ENCODE measurements at regions of chr13 and their contacts with region 1.

Region 1: GRCh38 chr13:41075034-41075433 is 13.7 kb downstream of the WBP4 start:
- H3K4me3 Mint-ChIP-seq: no peak overlapping the region
- H3K27ac Mint-ChIP-seq: no peak overlapping the region
- H3K4me1 Mint-ChIP-seq: no peaks in the 10 kb centered on the region
- H3K27me3 Mint-ChIP-seq: no peaks in the 10 kb centered on the region

Region 2: GRCh38 chr13:40974460-40975407 is 100.3 kb before region 1 on chr13:
- intact Hi-C with region 1: no loop called
- H3K4me3 Mint-ChIP-seq: no peak overlapping the region
- H3K27ac Mint-ChIP-seq: no peak overlapping the region
- H3K4me1 Mint-ChIP-seq: peaks cover 70% of the 10 kb centered on the region
- H3K27me3 Mint-ChIP-seq: no peaks in the 10 kb centered on the region

Region 3: DNA sequence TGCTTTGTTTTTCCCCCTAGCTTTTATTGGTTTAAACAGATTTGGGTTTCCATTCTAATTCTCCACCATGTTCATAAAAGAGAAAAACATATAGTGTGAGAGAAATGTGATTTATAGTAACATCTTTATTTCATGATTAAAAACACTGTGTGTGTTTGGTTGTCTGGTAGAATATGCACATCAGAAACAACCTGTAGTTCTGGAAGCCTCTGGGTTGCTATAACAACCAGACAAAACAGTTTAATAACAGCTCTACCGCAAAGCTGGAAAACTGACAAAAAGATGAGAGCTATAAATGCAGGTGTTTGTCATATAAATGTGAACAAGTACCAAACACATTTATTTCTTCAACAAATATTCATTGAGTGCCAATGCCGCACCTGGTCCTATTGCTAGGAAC is 47.8 kb after region 1 on chr13:
- intact Hi-C with region 1: loop called (anchors 5 kb)
- H3K4me3 Mint-ChIP-seq: no peak overlapping the region
- H3K27ac Mint-ChIP-seq: no peak overlapping the region
- H3K4me1 Mint-ChIP-seq: peaks cover under 1% of the 10 kb centered on the region
- H3K27me3 Mint-ChIP-seq: no peaks in the 10 kb centered on the region

Region 4: GRCh38 chr13:41222259-41222852 is 147.3 kb after region 1 on chr13:
- intact Hi-C with region 1: loop called (anchors 1 kb)
- H3K4me3 Mint-ChIP-seq: no peak overlapping the region
- H3K27ac Mint-ChIP-seq: no peak overlapping the region
- H3K4me1 Mint-ChIP-seq: no peaks in the 10 kb centered on the region
- H3K27me3 Mint-ChIP-seq: no peaks in the 10 kb centered on the region

Region 5: DNA sequence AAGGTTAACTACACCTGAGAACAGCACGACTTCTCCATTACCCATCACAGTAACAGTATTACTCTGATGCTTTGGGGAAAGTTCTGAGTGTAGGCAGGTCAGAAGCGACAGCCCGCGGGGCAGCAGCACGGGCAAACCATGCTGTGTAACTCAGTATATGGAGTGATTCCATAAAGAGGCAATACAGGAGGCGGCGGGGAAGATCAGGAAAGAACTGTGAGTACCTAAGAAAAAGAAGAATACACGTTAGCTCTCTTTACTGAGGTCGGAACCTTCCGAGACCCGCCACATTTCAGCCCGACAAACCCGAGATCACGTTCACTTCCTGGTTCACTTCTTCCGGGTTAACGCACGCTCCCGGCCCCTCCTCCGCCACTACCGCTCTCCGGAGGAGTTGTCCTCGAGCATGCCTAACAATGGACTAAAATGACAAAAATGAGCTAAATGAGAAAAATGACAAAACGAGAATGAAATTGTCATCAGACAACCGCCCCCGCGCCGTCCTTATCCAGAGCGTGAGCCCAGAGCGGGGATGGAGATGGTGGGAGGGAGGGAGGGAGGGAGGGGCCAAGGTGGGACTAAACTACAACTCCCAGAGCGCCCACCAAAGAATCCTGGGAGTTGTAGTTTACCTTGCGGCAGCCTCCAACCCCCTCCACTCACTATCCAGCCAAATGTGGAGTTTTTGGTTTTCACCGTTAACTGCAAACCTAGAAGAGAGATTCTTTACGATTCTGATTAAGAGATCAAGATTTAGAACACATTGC is 188.4 kb after region 1 on chr13 and contains the start of gene MTRF1:
- intact Hi-C with region 1: no loop called
- H3K4me3 Mint-ChIP-seq: peak within 1 kb of the TSS; percentile 99
- H3K27ac Mint-ChIP-seq: peak within 1 kb of the TSS; percentile 93
- H3K4me1 Mint-ChIP-seq: peaks cover 6% of the 10 kb centered on the region
- H3K27me3 Mint-ChIP-seq: no peaks in the 10 kb centered on the region

Region 6: DNA sequence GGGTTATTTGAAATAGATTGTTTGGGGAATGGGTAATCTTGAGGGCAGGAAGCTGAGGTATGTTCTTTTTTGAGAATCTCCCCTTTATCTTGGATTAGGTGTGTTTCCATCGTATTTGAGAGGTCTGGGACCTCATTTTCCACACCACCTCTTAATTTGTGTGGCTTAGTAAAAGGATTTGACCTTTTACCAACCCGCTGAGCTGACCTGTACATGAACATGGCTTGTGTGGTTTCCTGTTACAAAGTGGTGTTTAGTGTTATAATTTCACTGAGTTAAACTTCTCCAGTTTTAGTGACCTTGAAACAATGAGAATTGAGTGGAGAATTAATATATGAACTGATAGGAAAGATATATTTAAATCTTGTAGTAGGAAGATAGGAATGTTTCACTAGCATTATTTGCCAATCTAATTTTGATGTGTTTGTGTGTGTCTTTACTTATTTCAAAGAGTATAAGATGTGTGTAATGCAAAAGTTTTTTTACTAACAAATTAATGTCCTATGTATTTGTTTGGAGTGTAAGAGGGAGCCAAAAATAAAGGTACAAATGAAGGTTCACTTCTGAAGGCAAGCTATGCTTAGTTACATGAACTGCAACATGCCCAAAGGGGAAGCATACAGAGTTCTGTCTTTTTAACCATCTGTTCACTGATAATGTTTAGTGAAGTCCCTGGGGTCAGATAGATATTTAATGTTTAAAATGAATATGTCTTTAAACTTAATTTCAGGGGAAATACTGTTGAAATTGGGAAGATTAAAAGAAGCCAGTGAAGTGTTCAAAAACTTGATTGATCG is 253.2 kb after region 1 on chr13:
- intact Hi-C with region 1: loop called (anchors 10 kb)
- H3K4me3 Mint-ChIP-seq: no peak overlapping the region
- H3K27ac Mint-ChIP-seq: no peak overlapping the region
- H3K4me1 Mint-ChIP-seq: peaks cover 16% of the 10 kb centered on the region
- H3K27me3 Mint-ChIP-seq: no peaks in the 10 kb centered on the region

Region 7: GRCh38 chr13:41520016-41520659 is 445.1 kb after region 1 on chr13:
- intact Hi-C with region 1: no loop called
- H3K4me3 Mint-ChIP-seq: no peak overlapping the region
- H3K27ac Mint-ChIP-seq: peak overlapping the region; percentile 78
- H3K4me1 Mint-ChIP-seq: peaks cover 33% of the 10 kb centered on the region
- H3K27me3 Mint-ChIP-seq: no peaks in the 10 kb centered on the region

Measured in dendritic cell treated with granulocyte-macrophage colony-stimulating factor and Interleukin-4, amounts not matched to agents 40 ng/mL and 50 ng/mL, for 4 days (primary cell).